GM12878 (cell line): ENCODE measurements at regions of chr9 and their contacts with region 1.

Region 1: DNA sequence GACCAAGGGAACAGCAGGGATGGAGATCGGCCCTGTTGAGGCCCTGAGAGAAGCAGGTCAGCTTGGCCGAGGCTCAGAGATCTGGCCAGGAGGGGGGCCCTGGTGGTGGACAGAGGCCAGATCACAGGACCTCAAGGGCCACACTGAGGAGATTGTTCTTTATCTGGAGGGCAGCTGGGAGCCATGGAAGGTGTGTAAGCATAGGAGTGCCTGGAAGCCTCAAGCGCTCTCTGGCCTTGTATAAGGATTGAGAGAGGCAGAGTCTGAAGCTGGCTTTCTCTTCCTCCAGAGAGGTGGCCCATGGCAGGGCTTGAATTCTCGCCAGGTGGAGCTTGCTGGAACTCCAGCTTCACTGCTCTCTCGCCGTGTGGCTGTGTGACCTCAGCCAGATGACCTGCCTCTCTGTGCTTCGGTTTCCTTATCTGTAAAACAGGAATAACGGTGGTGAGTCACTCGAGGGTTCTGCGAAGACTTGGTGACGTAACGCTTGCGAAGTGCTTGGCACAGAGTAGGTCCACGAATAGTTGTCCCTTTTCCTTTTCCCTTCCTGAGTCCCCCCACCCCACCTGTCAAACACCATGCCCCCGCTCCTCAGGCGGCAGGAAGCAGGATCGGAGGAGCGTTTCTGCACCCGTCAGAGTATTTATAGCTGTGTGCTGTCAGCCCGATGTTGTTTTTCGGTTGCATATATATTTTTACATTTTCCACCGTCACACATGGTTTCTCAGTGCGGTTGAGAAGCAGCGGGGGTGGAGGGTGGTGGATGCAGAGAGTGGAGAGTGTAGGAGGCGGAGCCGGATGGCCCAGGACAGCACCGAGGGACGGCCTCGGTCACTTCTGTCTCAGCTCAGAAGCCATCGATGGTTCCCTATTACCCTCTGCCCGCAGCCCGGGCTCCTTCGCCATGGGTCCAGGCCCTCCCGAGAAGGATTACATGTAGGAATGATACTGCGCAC is 17.0 kb upstream of the CRB2 start:
- DNase-seq: peak; percentile 94
- ATAC-seq: peak; percentile 80
- H3K4me3 ChIP-seq: peak overlapping the region; percentile 60
- H3K27ac ChIP-seq: peak overlapping the region; percentile 99
- H3K4me1 ChIP-seq: peaks cover 90% of the 10 kb centered on the region
- H3K27me3 ChIP-seq: no peaks in the 10 kb centered on the region
- CTCF ChIP-seq: no peak
- EP300 ChIP-seq: peak in 1 of 2 experiments; percentile 88; a peak in 3 of 4 replicates
- POLR2A ChIP-seq: peak; percentile 80
- RAD21 ChIP-seq: 0 out of 2 replicates have a peak, but pooled peaks have one; percentile 20

Region 2: DNA sequence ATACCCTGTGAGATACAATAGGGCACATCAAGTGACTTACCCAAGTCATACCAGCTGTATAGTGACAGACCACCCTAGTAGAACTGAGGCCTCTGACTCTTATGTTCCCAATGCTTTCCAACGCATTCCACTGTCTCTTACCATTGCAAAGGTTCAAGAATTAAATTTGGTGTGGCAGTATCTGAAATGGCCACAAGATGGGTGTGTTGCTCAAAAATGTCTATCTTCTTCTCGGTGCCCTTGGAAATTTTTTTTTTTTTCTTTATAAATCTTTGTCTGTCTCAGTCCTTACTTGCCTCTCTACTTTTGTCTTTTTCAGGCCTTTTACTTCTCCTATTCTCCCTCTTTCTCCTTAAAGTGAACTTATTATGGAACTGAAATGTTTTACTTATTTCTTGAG is 257.2 kb before region 1 on chr9:
- CTCF ChIA-PET with region 1: interaction called, 12 read pairs
- POLR2A ChIA-PET with region 1: no interaction called
- RAD21 ChIA-PET with region 1: no interaction called
- SMC1A ChIA-PET with region 1: interaction called, 16 read pairs
- in situ Hi-C with region 1: no loop called
- intact Hi-C with region 1: no loop called
- DNase-seq: peak; percentile 13
- ATAC-seq: peak; percentile 78
- H3K4me3 ChIP-seq: no peak overlapping the region
- H3K27ac ChIP-seq: no peak overlapping the region; the same call in 1 of the 2 replicates
- H3K4me1 ChIP-seq: no peaks in the 10 kb centered on the region
- H3K27me3 ChIP-seq: no peaks in the 10 kb centered on the region
- CTCF ChIP-seq: peak; percentile 43 to 75 (median 69); a peak in 5 of 6 replicates
- EP300 ChIP-seq: no peak
- POLR2A ChIP-seq: no peak
- RAD21 ChIP-seq: peak; percentile 77

Region 3: GRCh38 chr9:123174887-123175518 is 164.0 kb before region 1 on chr9:
- CTCF ChIA-PET with region 1: interaction called, 3 read pairs
- POLR2A ChIA-PET with region 1: no interaction called
- RAD21 ChIA-PET with region 1: interaction called, 5 read pairs
- SMC1A ChIA-PET with region 1: interaction called, 3 read pairs
- in situ Hi-C with region 1: no loop called
- intact Hi-C with region 1: loop called (anchors 5 kb)
- DNase-seq: peak; percentile 75
- ATAC-seq: peak; percentile 97
- H3K4me3 ChIP-seq: no peak overlapping the region; the same call in 1 of the 2 replicates
- H3K27ac ChIP-seq: peak overlapping the region; percentile 95
- H3K4me1 ChIP-seq: peaks cover 45% of the 10 kb centered on the region
- H3K27me3 ChIP-seq: no peaks in the 10 kb centered on the region
- CTCF ChIP-seq: no peak
- EP300 ChIP-seq: peak; percentile 91 to 93
- POLR2A ChIP-seq: no peak
- RAD21 ChIP-seq: no peak

Region 4: GRCh38 chr9:123268240-123268949 is 70.6 kb before region 1 on chr9 and contains the start of gene STRBP:
- CTCF ChIA-PET with region 1: interaction called, 4 read pairs
- POLR2A ChIA-PET with region 1: interaction called, 6 read pairs
- RAD21 ChIA-PET with region 1: interaction called, 12 read pairs
- SMC1A ChIA-PET with region 1: interaction called, 10 read pairs
- in situ Hi-C with region 1: no loop called
- intact Hi-C with region 1: loop called (anchors 1 kb)
- DNase-seq: peak; percentile 50
- ATAC-seq: peak; percentile 91
- H3K4me3 ChIP-seq: peak within 1 kb of the TSS; percentile 83
- H3K27ac ChIP-seq: peak within 1 kb of the TSS; percentile 61
- H3K4me1 ChIP-seq: peaks cover 17% of the 10 kb centered on the region
- H3K27me3 ChIP-seq: no peaks in the 10 kb centered on the region
- CTCF ChIP-seq: peak in 1 of 3 experiments; percentile 18; a peak in 1 of 6 replicates
- EP300 ChIP-seq: no peak
- POLR2A ChIP-seq: peak; percentile 69
- RAD21 ChIP-seq: no peak
- polyA plus RNA-seq, gene STRBP: 31.0 to 50.1 TPM

Region 5: GRCh38 chr9:123322273-123323195 is 16.5 kb before region 1 on chr9:
- CTCF ChIA-PET with region 1: interaction called, 56 read pairs
- POLR2A ChIA-PET with region 1: interaction called, 35 read pairs
- RAD21 ChIA-PET with region 1: interaction called, 61 read pairs
- SMC1A ChIA-PET with region 1: interaction called, 268 read pairs
- in situ Hi-C with region 1: no loop called
- intact Hi-C with region 1: loop called (anchors 1 kb)
- DNase-seq: no peak
- ATAC-seq: peak; percentile 82
- H3K4me3 ChIP-seq: peak overlapping the region; percentile 45
- H3K27ac ChIP-seq: peak overlapping the region; percentile 89
- H3K4me1 ChIP-seq: peaks cover 72% of the 10 kb centered on the region
- H3K27me3 ChIP-seq: no peaks in the 10 kb centered on the region
- CTCF ChIP-seq: no peak
- EP300 ChIP-seq: peak in 1 of 2 experiments; percentile 38; a peak in 3 of 4 replicates
- POLR2A ChIP-seq: peak; percentile 53
- RAD21 ChIP-seq: no peak

Region 6: GRCh38 chr9:123364241-123364824 is 25.3 kb after region 1 on chr9:
- CTCF ChIA-PET with region 1: no interaction called
- POLR2A ChIA-PET with region 1: no interaction called
- RAD21 ChIA-PET with region 1: no interaction called
- SMC1A ChIA-PET with region 1: no interaction called
- in situ Hi-C with region 1: no loop called
- intact Hi-C with region 1: no loop called
- DNase-seq: no peak
- ATAC-seq: no peak; the same call in 2 of the 3 replicates
- H3K4me3 ChIP-seq: no peak overlapping the region
- H3K27ac ChIP-seq: no peak overlapping the region
- H3K4me1 ChIP-seq: peaks cover 12% of the 10 kb centered on the region
- H3K27me3 ChIP-seq: no peaks in the 10 kb centered on the region; a peak in 1 of 4 replicates
- CTCF ChIP-seq: no peak
- EP300 ChIP-seq: no peak
- POLR2A ChIP-seq: no peak
- RAD21 ChIP-seq: no peak

Region 7: DNA sequence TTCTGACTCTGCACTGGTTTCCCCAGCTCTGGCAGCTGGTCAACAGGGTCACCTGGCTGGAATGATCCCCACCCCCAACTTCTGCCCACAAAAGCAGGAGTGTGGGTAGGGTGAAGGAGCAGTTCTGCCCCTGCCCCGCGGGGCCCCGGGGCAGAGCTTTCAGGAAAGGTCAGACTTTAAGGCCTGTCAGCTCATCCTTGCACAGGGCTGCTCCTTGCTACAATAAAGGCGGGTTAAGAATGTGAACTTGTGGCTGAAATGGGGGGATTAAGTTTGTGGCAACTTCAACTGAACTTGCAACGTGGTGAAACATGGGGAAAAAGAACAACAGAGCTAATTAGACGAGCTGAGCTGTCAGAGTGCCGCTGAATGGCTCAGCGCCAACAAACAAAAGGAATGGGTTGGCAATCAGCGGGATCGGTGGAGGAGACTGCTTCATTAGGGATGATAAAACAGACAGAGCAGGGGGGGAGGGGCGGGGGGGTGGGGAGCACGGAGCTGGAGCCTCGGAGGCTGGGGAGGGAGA is 67.8 kb after region 1 on chr9:
- CTCF ChIA-PET with region 1: no interaction called
- POLR2A ChIA-PET with region 1: no interaction called
- RAD21 ChIA-PET with region 1: no interaction called
- SMC1A ChIA-PET with region 1: no interaction called
- in situ Hi-C with region 1: no loop called
- intact Hi-C with region 1: no loop called
- DNase-seq: no peak
- ATAC-seq: no peak
- H3K4me3 ChIP-seq: no peak overlapping the region
- H3K27ac ChIP-seq: no peak overlapping the region
- H3K4me1 ChIP-seq: no peaks in the 10 kb centered on the region
- H3K27me3 ChIP-seq: no peaks in the 10 kb centered on the region
- CTCF ChIP-seq: no peak
- EP300 ChIP-seq: no peak
- POLR2A ChIP-seq: no peak
- RAD21 ChIP-seq: no peak